ENCODE measurements at regions of chr15 and their contacts with region 1.

Region 1: GRCh38 chr15:25438601-25439368 is at the start of gene UBE3A:
- DNase-seq: peak; percentile 71
- ATAC-seq: peak; percentile 93
- H3K4me3 ChIP-seq: peak within 1 kb of the TSS; percentile 84
- H3K27ac ChIP-seq: peak within 1 kb of the TSS; percentile 99
- H3K4me1 ChIP-seq: peaks cover 9 to 19% of the 10 kb centered on the region in 2 experiments
- H3K27me3 ChIP-seq: no peaks in the 10 kb centered on the region
- CTCF ChIP-seq: no peak
- POLR2A ChIP-seq: no peak
- RAD21 ChIP-seq: no peak
- total RNA-seq, gene UBE3A: 104 TPM

Region 2: DNA sequence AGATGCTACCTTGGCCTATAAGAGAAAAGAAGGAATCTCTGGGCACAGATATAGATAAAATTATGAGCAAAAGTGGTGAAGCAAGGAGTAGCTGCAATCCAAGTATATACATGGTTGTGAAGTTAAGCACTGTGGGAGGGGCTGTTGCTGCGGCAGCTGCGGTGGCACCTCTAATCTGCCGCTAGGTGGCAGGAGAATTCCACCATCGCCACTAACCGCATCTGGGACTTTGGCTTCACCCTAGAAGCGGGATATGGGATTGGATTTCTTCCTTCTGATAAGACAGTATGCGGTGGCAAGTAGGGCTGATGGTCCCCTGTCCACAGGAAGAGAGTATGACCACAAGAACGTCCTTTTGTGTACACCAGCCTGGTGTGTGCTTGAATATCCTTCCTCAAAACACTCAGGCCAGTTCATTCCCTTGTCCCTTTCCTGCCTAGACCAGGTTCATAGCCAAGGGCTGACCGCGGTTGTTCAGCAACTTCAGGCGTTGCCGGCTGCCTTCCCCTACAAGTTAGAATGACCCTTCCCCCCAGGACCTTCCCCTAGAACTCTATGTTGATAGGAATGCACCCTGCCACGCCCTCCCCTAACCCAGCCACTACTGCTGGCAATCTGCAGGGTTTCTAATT is 1796.3 kb before region 1 on chr15:
- CTCF ChIA-PET with region 1: no interaction called
- POLR2A ChIA-PET with region 1: no interaction called
- RAD21 ChIA-PET with region 1: no interaction called
- intact Hi-C with region 1: loop called (anchors 10 kb)
- DNase-seq: peak; percentile 23
- ATAC-seq: peak; percentile 86
- H3K4me3 ChIP-seq: no peak overlapping the region
- H3K27ac ChIP-seq: no peak overlapping the region
- H3K4me1 ChIP-seq: no peaks in the 10 kb centered on the region
- H3K27me3 ChIP-seq: no peaks in the 10 kb centered on the region
- CTCF ChIP-seq: peak in 2 of 3 experiments; percentile 83 to 91; a peak in 4 of 6 replicates
- POLR2A ChIP-seq: no peak
- RAD21 ChIP-seq: peak; percentile 55

Region 3: DNA sequence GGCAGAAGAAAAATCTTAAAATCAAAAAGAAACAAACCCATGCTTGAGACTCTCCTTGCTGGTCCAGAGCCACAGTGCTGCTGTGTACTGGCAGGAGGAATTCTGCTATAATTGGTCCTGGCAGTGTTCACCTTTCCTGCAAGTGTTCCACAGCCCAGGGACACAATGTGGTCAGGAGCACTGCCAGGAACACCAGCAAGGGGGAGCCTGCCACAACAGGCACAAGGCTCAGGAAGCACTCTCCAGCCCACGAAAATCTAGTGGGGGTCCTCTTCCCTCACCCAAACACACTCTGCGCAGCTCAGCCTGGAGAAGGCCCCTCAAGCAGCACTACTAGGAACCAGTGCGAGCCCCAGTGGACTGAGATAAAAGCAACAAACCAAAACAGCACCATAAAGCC is 92.8 kb before region 1 on chr15:
- CTCF ChIA-PET with region 1: no interaction called
- POLR2A ChIA-PET with region 1: no interaction called
- RAD21 ChIA-PET with region 1: no interaction called
- intact Hi-C with region 1: loop called (anchors 5 kb)
- DNase-seq: no peak
- ATAC-seq: peak; percentile 67
- H3K4me3 ChIP-seq: no peak overlapping the region
- H3K27ac ChIP-seq: no peak overlapping the region
- H3K4me1 ChIP-seq: no peaks in the 10 kb centered on the region
- H3K27me3 ChIP-seq: no peaks in the 10 kb centered on the region
- CTCF ChIP-seq: peak in 2 of 3 experiments; percentile 31 to 38; a peak in 3 of 6 replicates
- POLR2A ChIP-seq: no peak
- RAD21 ChIP-seq: no peak